ENCODE measurements at regions of chr3 and their contacts with region 1.

Region 1: DNA sequence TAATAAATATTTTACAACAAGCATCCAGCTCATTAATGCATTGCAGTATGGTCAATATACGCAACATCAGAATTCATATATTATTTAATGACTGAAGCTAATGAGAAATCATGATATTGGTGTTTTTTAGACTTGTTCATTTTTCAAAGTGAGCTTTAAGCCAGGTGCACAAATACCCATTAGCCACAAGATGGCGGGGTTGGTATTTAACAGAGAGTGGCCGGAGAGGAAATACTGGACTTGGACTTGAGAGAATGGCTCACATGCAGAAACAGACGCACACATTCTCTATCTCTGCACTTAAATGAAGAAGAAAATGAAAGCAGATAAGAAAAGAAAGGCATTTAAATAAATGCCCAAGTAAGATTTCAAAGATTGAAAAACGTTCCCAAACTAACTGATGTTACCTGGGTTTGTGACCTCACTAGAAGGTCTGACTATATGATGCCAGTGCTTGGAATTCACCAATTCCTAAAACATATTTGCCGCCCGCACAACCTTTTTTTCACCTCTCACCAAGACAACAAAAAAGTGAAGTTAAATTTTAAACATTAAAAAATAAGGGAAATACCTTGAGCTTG is 21.2 kb upstream of the CRBN start:
- DNase-seq: peak; percentile 48 to 50
- H3K4me3 ChIP-seq: no peak overlapping the region
- H3K27ac ChIP-seq: no peak overlapping the region
- H3K4me1 ChIP-seq: no peaks in the 10 kb centered on the region
- H3K27me3 ChIP-seq: no peaks in the 10 kb centered on the region
- CTCF ChIP-seq: peak; percentile 29 to 76 (median 68)
- POLR2A ChIP-seq: no peak

Region 2: GRCh38 chr3:2579206-2579605 is 621.5 kb before region 1 on chr3:
- intact Hi-C with region 1: no loop called
- DNase-seq: no peak
- H3K4me3 ChIP-seq: no peak overlapping the region
- H3K27ac ChIP-seq: no peak overlapping the region
- H3K4me1 ChIP-seq: no peaks in the 10 kb centered on the region
- H3K27me3 ChIP-seq: no peaks in the 10 kb centered on the region
- CTCF ChIP-seq: no peak
- POLR2A ChIP-seq: no peak

Region 3: GRCh38 chr3:3316521-3316920 is 115.8 kb after region 1 on chr3:
- intact Hi-C with region 1: no loop called
- DNase-seq: no peak
- H3K4me3 ChIP-seq: no peak overlapping the region
- H3K27ac ChIP-seq: no peak overlapping the region
- H3K4me1 ChIP-seq: no peaks in the 10 kb centered on the region
- H3K27me3 ChIP-seq: no peaks in the 10 kb centered on the region
- CTCF ChIP-seq: no peak
- POLR2A ChIP-seq: no peak

Region 4: DNA sequence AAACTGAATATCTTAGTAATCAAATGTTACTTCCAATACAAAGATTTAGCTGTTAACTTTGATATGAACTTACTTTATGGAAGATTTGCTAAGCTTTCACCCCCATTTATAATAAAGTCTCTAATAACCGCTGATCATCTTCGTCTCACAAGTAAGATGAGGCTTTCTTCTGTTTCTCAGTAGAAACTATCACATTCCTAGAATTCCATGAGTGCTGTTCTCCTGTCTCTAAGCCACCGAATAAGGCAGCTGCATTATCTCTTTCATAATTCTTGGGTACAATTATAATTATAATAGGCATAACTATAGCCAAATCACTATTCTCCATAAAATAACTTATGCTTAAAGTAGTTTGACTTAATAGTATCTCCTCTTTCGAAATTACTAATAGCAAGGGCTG is 1084.1 kb after region 1 on chr3:
- intact Hi-C with region 1: loop called (anchors 5 kb)
- DNase-seq: no peak
- H3K4me3 ChIP-seq: no peak overlapping the region
- H3K27ac ChIP-seq: no peak overlapping the region
- H3K4me1 ChIP-seq: no peaks in the 10 kb centered on the region
- H3K27me3 ChIP-seq: no peaks in the 10 kb centered on the region
- CTCF ChIP-seq: no peak
- POLR2A ChIP-seq: no peak